RWPE1 (cell line): ENCODE measurements at regions of chr2 and their contacts with region 1.

Region 1: DNA sequence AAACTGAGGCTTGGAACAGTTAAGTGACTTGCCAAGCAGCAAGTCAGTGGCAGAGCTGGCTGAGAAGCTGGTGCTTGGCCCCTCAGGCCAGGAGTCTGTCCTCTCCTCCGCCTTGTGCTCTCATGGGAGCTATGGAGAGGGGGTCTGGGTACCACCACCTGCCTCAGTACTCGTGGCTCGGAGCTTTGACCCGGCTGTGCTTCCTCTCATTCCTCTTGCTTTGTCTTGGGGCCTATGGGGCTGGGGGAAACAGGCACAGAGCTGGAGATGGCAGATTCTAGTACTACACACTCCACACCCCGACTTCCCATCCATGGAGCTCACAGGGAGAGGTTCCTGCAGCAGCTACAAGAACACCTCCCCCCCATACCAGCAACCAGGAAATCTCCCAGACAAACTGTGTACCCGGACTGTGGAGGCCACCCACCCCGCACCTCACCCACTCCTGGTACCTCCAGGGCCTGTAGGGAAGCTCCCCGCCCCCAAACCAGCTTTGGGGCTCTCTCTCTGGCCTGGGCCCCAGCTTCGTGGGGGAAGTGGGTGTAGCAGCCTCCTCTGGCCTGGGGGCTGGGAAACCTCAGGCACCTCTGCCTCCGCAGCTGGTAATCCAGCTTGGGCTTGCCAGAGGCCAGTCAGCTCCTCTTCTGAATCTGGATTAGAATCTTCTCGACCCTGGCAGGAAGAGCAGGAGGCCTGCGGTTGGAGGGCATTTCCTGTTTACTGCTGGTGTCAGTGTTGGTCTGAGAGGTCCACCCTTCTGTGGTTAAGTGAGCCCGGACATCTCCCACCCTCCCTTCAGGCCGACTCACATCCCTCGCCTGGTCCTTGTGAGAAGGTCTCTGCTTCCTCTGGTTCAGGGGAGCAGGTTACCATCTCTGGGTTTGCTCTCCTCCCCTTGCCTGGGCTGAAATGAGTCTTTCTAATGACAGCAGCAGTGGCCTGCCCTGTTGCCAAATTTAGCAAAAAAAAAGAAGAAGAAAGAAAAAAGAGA is 22.3 kb upstream of the RHOB start:
- DNase-seq: no peak
- H3K27ac ChIP-seq: peak overlapping the region; percentile 71
- CTCF ChIP-seq: no peak

Region 2: DNA sequence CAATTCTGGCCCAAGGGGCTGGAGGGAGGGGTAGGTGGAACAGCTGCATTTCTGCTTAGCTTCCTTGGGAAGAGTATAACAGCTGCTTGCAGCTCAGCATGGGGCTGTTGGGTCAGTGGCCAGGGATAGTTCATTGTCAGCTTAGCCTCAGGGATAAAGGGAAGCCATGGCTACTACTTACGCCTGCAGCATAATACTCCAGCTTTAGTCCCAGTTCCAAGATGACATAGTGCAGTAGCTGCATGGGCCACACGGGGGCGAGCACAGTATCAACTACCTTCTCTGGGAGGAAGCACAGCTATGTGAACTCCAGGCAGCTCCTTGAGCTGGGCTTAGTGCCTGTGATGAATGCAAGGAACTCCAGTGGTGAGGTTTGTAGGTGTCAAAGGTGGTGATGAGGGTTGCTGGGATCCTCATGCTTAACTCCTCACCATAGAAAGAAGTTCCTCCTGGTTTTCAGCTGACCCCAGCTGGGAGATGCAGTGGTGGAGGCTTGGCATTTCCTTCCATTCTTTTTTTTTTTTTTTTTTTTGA is 13.2 kb before region 1 on chr2:
- CTCF ChIA-PET with region 1: interaction called, 12 read pairs
- POLR2A ChIA-PET with region 1: no interaction called
- DNase-seq: peak; percentile 68
- H3K27ac ChIP-seq: no peak overlapping the region
- CTCF ChIP-seq: peak; percentile 79